SK-N-SH (cell line): ENCODE measurements at regions of chr15 and their contacts with region 1.

Region 1: GRCh38 chr15:60585743-60586708 is 107.1 kb upstream of the ICE2 start:
- DNase-seq: peak; percentile 66
- H3K4me3 ChIP-seq: no peak overlapping the region; a peak in 1 of 4 replicates
- H3K27ac ChIP-seq: no peak overlapping the region
- H3K4me1 ChIP-seq: peaks cover 0 to 3% of the 10 kb centered on the region in 2 experiments; a peak in 3 of 4 replicates
- H3K27me3 ChIP-seq: no peaks in the 10 kb centered on the region
- CTCF ChIP-seq: peak; percentile 98
- EP300 ChIP-seq: no peak
- RAD21 ChIP-seq: peak; percentile 97

Region 2: GRCh38 chr15:60541481-60542299 is 44.3 kb before region 1 on chr15:
- CTCF ChIA-PET with region 1: no interaction called
- POLR2A ChIA-PET with region 1: no interaction called
- DNase-seq: no peak
- H3K4me3 ChIP-seq: no peak overlapping the region
- H3K27ac ChIP-seq: no peak overlapping the region
- H3K4me1 ChIP-seq: no peaks in the 10 kb centered on the region; a peak in 1 of 4 replicates
- H3K27me3 ChIP-seq: no peaks in the 10 kb centered on the region
- CTCF ChIP-seq: no peak
- EP300 ChIP-seq: no peak
- RAD21 ChIP-seq: no peak

Region 3: GRCh38 chr15:60568301-60568742 is 17.7 kb before region 1 on chr15:
- CTCF ChIA-PET with region 1: interaction called, 44 read pairs
- POLR2A ChIA-PET with region 1: no interaction called
- DNase-seq: no peak
- H3K4me3 ChIP-seq: no peak overlapping the region
- H3K27ac ChIP-seq: no peak overlapping the region
- H3K4me1 ChIP-seq: peaks cover 0 to 11% of the 10 kb centered on the region in 2 experiments; a peak in 2 of 4 replicates
- H3K27me3 ChIP-seq: no peaks in the 10 kb centered on the region
- CTCF ChIP-seq: no peak
- EP300 ChIP-seq: no peak
- RAD21 ChIP-seq: no peak

Region 4: DNA sequence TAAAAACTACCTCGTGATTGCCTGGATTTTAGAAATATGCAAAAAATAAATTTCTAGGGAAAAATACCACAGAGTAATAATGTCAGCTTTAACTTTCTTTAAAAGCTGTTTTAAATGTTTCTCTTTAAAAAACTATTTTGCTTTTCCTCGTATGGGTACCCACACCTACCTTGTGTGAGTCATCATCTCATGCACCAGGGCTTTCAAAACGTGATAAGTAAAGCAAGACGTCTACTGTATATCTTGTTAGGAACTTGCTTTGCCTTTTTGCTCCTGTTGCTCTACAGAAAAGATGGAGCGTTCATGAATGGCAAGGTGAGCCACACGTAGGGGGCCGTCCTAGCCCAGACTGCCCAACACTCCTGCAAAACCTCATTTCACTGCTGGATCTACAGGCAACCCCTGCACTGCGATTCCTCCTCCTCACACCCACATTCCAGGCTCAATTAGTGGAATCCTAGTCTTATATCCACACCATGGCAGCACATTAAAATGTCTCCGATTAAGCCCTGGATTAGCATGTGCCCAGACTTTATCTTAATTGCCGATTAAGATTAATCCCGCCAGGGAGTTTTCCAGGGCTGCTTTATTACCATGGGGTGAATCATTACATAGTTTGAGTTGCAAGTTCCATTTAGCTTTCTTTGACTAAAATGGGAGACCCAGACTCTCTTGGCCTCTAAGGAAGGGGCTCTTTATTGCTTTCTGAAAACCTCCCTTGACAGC is 186.5 kb after region 1 on chr15:
- CTCF ChIA-PET with region 1: no interaction called
- POLR2A ChIA-PET with region 1: no interaction called
- DNase-seq: no peak
- H3K4me3 ChIP-seq: no peak overlapping the region
- H3K27ac ChIP-seq: no peak overlapping the region
- H3K4me1 ChIP-seq: no peaks in the 10 kb centered on the region; a peak in 2 of 4 replicates
- H3K27me3 ChIP-seq: no peaks in the 10 kb centered on the region
- CTCF ChIP-seq: no peak
- EP300 ChIP-seq: no peak
- RAD21 ChIP-seq: no peak

Region 5: DNA sequence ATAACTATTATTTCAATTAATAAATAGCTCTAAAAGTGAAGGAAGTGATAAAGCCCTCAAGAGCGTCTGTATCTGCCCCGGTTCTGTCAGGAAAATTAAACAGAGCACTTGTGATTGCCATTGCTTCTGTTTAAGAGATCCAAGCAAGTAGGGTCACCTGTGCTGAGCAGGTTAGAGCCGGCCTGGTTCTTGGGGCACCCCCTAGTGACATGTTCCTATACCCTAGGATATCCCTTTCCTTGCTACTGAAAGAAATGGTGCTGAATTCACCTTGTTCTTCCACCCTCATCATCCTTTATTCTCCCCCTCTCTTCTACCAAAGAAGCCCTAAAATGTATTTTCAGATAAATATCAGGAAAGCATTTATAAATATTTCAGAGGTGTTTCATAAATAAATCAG is 319.6 kb after region 1 on chr15:
- CTCF ChIA-PET with region 1: interaction called, 25 read pairs
- POLR2A ChIA-PET with region 1: no interaction called
- DNase-seq: no peak
- H3K4me3 ChIP-seq: no peak overlapping the region
- H3K27ac ChIP-seq: no peak overlapping the region
- H3K4me1 ChIP-seq: peaks cover 0 to 18% of the 10 kb centered on the region in 2 experiments; a peak in 2 of 4 replicates
- H3K27me3 ChIP-seq: no peaks in the 10 kb centered on the region
- CTCF ChIP-seq: no peak
- EP300 ChIP-seq: no peak
- RAD21 ChIP-seq: peak; percentile 39

Region 6: GRCh38 chr15:60922736-60923135 is 336.7 kb after region 1 on chr15:
- CTCF ChIA-PET with region 1: interaction called, 95 read pairs
- POLR2A ChIA-PET with region 1: no interaction called
- DNase-seq: no peak
- H3K4me3 ChIP-seq: no peak overlapping the region
- H3K27ac ChIP-seq: no peak overlapping the region
- H3K4me1 ChIP-seq: peaks cover 0 to 2% of the 10 kb centered on the region in 2 experiments; a peak in 1 of 4 replicates
- H3K27me3 ChIP-seq: no peaks in the 10 kb centered on the region
- CTCF ChIP-seq: no peak
- EP300 ChIP-seq: no peak
- RAD21 ChIP-seq: no peak

Region 7: DNA sequence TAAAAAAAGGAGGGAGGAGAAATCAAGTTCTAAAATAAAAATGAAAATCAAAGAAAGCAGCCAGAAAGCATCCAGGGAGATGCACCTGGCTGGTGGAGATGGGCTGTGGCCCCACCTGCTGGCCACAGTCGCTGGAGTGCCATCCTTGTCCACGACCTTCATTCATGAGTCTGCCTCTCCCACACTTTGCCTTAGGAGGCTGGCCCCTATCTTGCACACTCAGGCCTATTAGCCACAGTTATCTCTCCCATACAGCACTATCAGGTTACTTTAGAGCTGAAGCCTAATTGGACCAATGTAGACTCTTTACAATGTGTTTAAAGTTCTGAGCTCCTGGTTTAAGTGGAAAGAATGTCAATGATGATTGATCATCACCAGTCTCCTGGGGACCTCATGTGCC is 1035.1 kb after region 1 on chr15:
- CTCF ChIA-PET with region 1: interaction called, 16 read pairs
- POLR2A ChIA-PET with region 1: no interaction called
- DNase-seq: peak; percentile 61
- H3K4me3 ChIP-seq: no peak overlapping the region
- H3K27ac ChIP-seq: no peak overlapping the region
- H3K4me1 ChIP-seq: no peaks in the 10 kb centered on the region
- H3K27me3 ChIP-seq: no peaks in the 10 kb centered on the region
- CTCF ChIP-seq: peak; percentile 64
- EP300 ChIP-seq: no peak
- RAD21 ChIP-seq: peak; percentile 87